ENCODE measurements at regions of chr20 and their contacts with region 1.

Region 1: GRCh38 chr20:51116771-51117686 is 94.1 kb upstream of the KCNG1 start:
- DNase-seq: peak; percentile 24
- H3K4me3 Mint-ChIP-seq: no peak overlapping the region
- H3K27ac Mint-ChIP-seq: no peak overlapping the region
- H3K4me1 Mint-ChIP-seq: peaks cover 11% of the 10 kb centered on the region
- H3K27me3 Mint-ChIP-seq: peaks cover 47% of the 10 kb centered on the region
- CTCF ChIP-seq: no peak

Region 2: DNA sequence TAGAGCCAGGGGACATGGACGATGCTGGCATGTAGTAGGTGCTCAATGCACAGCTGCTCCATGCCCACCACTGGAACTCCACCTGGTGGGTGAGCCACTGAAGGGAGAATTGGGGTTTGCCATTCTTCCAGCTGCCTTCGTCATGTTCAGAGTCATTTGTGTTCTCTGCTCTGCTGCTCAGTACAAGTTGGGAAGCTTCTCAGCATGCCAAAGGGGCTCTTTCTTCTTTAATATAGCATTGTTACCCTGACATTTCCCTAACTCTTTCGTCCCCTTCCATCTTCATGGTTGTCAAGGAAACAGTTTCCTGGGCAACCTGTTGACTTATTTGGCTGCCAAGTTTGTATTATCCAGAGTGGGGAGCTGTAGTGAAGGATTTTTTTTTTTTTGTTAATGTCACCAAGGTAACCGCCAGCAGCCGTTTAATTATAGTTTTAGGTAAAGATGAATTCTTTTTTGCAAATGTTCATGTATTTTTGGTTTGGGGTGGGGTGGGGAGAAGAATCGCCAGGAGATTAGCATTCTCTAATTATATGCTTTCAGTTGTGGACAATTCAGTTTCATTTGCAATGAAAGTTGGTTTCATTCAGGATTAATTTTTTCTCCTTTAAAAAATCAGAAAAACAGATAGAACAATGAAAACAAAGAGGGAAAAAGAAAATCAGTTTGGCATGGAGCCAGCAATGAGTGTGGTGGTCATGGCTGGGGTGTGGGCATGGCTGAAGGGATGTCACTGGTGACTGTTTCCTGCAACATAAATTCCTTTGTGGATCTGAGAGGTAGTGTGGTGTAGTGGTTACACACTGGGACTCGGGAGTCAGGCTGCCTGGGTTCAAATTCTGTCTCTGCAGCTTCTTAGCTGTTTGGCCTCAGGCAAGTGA is 21.2 kb before region 1 on chr20:
- CTCF ChIA-PET with region 1: interaction called, 16 read pairs
- intact Hi-C with region 1: no loop called
- DNase-seq: no peak
- H3K4me3 Mint-ChIP-seq: no peak overlapping the region
- H3K27ac Mint-ChIP-seq: no peak overlapping the region
- H3K4me1 Mint-ChIP-seq: peaks cover 9% of the 10 kb centered on the region
- H3K27me3 Mint-ChIP-seq: peaks cover 76% of the 10 kb centered on the region
- CTCF ChIP-seq: no peak

Region 3: DNA sequence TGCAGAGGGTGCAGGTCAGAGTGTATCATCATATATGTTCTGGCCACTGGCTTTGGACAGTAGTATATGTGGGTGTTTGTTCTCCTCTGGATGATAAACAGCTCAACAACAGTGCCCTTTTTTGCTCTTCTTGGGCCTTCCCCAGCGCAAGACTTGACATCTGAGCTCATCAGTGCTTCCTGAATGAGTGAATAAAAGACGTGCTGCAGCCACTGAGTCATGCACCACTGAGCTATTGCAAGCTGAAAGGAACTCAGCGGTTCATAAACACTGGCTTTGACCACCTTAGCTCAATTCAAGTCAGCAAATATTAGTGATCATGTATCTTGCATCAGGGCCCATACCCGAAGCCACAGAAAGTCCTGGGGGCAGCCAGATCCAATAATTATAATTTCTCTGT is 11.2 kb after region 1 on chr20:
- CTCF ChIA-PET with region 1: interaction called, 13 read pairs
- intact Hi-C with region 1: no loop called
- DNase-seq: no peak
- H3K4me3 Mint-ChIP-seq: no peak overlapping the region
- H3K27ac Mint-ChIP-seq: no peak overlapping the region
- H3K4me1 Mint-ChIP-seq: no peaks in the 10 kb centered on the region
- H3K27me3 Mint-ChIP-seq: peaks cover 32% of the 10 kb centered on the region
- CTCF ChIP-seq: no peak